Activated naive CD8-positive, alpha-beta T cell treated with anti-CD3 and anti-CD28 coated beads, Interleukin-2, amount 10 ng/mL, durations not matched to agents 7 days and 5 days (primary cell): ENCODE measurements at regions of chr19 and their contacts with region 1.

Region 1: GRCh38 chr19:49929611-49930482 is 543 bp upstream of the NUP62 start:
- DNase-seq: peak; percentile 86
- ATAC-seq: peak; percentile 86
- H3K4me3 Mint-ChIP-seq: peak overlapping the region; percentile 99
- H3K27ac Mint-ChIP-seq: peak overlapping the region; percentile 98
- H3K4me1 Mint-ChIP-seq: peaks cover 44% of the 10 kb centered on the region
- H3K27me3 Mint-ChIP-seq: no peaks in the 10 kb centered on the region

Region 2: GRCh38 chr19:49869441-49870176 is 60.2 kb before region 1 on chr19:
- POLR2A ChIA-PET with region 1: interaction called, 13 read pairs
- DNase-seq: peak; percentile 90
- ATAC-seq: peak; percentile 85
- H3K4me3 Mint-ChIP-seq: no peak overlapping the region
- H3K27ac Mint-ChIP-seq: peak overlapping the region; percentile 94
- H3K4me1 Mint-ChIP-seq: peaks cover 31% of the 10 kb centered on the region
- H3K27me3 Mint-ChIP-seq: no peaks in the 10 kb centered on the region

Region 3: GRCh38 chr19:49877020-49877878 is 52.6 kb before region 1 on chr19 and contains the starts of genes AKT1S1 and TBC1D17:
- POLR2A ChIA-PET with region 1: interaction called, 20 read pairs
- DNase-seq: peak; percentile 94
- ATAC-seq: peak; percentile 72
- H3K4me3 Mint-ChIP-seq: no peak within 1 kb of the TSS
- H3K27ac Mint-ChIP-seq: no peak within 1 kb of the TSS
- H3K4me1 Mint-ChIP-seq: peaks cover 25% of the 10 kb centered on the region
- H3K27me3 Mint-ChIP-seq: no peaks in the 10 kb centered on the region
- total RNA-seq, gene AKT1S1: 17.3 to 19.9 TPM
- total RNA-seq, gene TBC1D17: 51.3 to 53.4 TPM

Region 4: GRCh38 chr19:49896863-49897621 is 32.8 kb before region 1 on chr19 and contains the start of gene IL4I1:
- POLR2A ChIA-PET with region 1: interaction called, 17 read pairs
- DNase-seq: peak; percentile 49
- ATAC-seq: peak; percentile 68
- H3K4me3 Mint-ChIP-seq: peak within 1 kb of the TSS; percentile 80
- H3K27ac Mint-ChIP-seq: peak within 1 kb of the TSS; percentile 91
- H3K4me1 Mint-ChIP-seq: peaks cover 24% of the 10 kb centered on the region
- H3K27me3 Mint-ChIP-seq: no peaks in the 10 kb centered on the region
- total RNA-seq, gene IL4I1: 1.4 to 1.7 TPM

Region 5: GRCh38 chr19:49911381-49912145 is 18.3 kb before region 1 on chr19:
- POLR2A ChIA-PET with region 1: interaction called, 10 read pairs
- DNase-seq: no peak
- ATAC-seq: no peak
- H3K4me3 Mint-ChIP-seq: no peak overlapping the region
- H3K27ac Mint-ChIP-seq: peak overlapping the region; percentile 65
- H3K4me1 Mint-ChIP-seq: peaks cover 16% of the 10 kb centered on the region
- H3K27me3 Mint-ChIP-seq: no peaks in the 10 kb centered on the region

Region 6: DNA sequence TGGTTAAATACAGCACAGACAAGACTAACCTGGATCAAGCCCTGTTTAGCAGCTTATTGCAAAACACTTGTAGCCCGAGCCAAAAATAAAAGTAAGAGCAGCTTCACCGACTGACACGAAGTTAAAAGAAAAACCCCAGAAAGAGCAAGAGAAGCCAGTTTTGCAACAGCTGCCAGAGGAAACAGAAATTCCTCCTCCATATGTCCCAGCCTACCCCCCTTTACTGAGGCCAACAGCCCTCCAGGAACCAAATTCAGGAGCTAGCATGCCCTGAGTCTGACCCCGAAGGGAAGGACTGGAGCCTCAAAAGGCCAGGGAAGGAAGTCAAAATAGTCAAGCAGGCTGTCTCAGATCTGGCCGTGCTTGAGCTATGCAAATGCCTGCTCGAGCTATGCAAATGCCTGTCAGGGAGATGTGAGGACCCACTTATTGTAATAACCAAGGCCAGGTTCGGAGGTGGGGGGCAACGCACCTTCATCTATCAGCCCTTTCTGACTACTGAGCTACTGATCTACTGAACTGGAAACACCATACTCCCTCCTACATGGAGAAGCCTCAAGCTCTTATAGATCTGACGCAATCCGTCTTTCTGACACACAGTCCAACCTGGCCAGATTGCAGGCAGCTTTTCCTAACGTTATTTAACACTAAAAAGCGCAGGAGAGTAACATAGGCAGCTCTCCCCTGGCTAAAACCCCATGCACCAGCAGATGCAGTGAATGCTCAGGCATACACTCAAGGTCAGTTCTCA is 24.4 kb after region 1 on chr19:
- POLR2A ChIA-PET with region 1: no interaction called
- DNase-seq: no peak
- ATAC-seq: no peak
- H3K4me3 Mint-ChIP-seq: no peak overlapping the region
- H3K27ac Mint-ChIP-seq: no peak overlapping the region
- H3K4me1 Mint-ChIP-seq: peaks cover 14% of the 10 kb centered on the region
- H3K27me3 Mint-ChIP-seq: peaks cover 18% of the 10 kb centered on the region

Region 7: DNA sequence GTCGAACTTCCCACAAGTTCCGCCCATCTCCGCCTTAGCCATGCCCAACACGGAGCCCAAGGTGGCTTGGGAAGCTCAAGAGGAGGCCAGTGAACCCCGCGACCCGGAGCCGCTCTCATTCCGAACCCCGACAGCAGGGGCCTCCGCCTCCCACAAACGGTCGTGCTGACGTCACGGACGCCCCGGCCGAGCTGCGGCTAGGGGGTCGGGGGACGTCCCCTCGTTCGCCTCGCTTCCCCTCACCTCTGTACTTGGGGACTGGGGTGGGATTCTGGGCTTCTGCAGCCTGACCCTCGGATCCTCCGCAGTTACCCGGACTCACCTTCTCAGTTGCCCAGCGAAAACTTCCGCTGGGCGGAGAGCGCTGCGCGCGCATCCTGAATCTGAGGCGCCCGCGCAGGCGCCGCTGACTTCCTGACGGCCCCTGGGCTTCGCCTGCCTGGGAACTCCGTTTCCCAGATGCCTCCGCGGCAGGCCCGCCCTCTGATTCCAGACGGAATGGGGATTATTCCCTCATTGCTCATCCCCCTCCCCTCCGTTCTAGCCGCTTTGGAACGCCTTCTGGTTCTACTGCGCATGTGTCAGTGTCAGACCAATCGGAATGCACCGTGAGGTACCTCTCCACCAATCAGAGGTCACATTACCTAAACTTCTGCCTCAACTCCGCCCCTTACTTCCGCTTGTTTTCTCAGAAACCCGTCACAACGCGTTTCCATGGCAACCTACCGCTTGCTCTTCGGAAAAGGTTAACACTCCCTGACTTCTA is 95.4 kb after region 1 on chr19 and contains the start of gene VRK3:
- POLR2A ChIA-PET with region 1: interaction called, 19 read pairs
- DNase-seq: peak; percentile 96
- ATAC-seq: peak; percentile 90
- H3K4me3 Mint-ChIP-seq: peak within 1 kb of the TSS; percentile 93
- H3K27ac Mint-ChIP-seq: peak within 1 kb of the TSS; percentile 91
- H3K4me1 Mint-ChIP-seq: peaks cover 24% of the 10 kb centered on the region
- H3K27me3 Mint-ChIP-seq: no peaks in the 10 kb centered on the region
- total RNA-seq, gene VRK3: 81.2 to 82.1 TPM